ENCODE measurements at regions of chr19 and their contacts with region 1.

Region 1: GRCh38 chr19:4342615-4343369 is 570 bp upstream of the MPND start:
- DNase-seq: peak; percentile 81 to 97 (median 91)
- ATAC-seq: peak; percentile 79 to 81 (median 81)
- H3K4me3 ChIP-seq: peak overlapping the region; percentile 73 to 96
- H3K4me3 Mint-ChIP-seq: peak overlapping the region; percentile 84 to 90 (median 89)
- H3K27ac ChIP-seq: peak overlapping the region; percentile 86
- H3K27ac Mint-ChIP-seq: peak overlapping the region; percentile 84 to 94
- H3K4me1 ChIP-seq: peaks cover 8 to 46% of the 10 kb centered on the region in 2 experiments
- H3K4me1 Mint-ChIP-seq: peaks cover 30 to 41% (median 40%) of the 10 kb centered on the region in 3 donors
- H3K27me3 ChIP-seq: no peaks in the 10 kb centered on the region
- H3K27me3 Mint-ChIP-seq: no peaks in the 10 kb centered on the region

Region 2: DNA sequence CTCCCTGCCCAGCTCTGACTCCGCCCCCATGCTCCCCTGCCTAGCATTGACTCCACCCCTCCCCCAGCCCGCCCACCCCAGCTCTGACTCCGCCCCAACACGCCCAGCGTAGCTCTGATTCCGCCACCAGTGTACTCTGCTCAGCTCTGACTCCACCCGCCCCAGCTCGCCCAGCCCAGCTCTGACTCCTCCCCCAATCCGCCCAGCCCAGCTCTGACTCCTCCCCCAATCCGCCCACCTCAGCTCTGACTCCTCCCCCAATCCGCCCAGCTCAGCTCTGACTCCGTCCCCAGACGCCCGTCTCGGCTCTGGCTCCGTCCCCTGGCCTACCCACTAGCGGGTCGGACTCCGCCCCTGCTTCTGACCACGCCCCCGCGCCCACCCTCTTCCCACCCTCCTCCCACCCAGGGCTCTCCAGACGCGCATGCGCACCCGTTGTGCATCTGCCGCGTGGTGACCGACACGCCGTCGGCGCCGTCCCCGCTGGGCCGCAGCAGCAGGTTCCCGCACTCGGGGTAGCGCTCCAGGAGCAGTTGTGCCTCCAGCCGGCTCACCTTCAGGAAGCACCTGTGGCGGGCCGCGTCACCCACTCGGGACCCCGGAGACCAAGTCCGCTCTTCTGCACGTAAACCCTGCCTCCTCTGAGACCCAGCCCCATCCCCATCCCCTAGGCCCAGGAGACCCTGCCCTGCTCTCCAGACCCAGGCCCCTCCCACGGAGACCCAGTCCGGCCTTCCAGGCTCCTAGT is 14.4 kb before region 1 on chr19:
- CTCF ChIA-PET with region 1: interaction called in 1 of 2 experiments, 21 read pairs
- POLR2A ChIA-PET with region 1: interaction called in 1 of 2 experiments, 13 read pairs
- DNase-seq: peak; percentile 78 to 96 (median 90)
- ATAC-seq: peak; percentile 83 to 90 (median 88)
- H3K4me3 ChIP-seq: peak overlapping the region; percentile 62 to 65
- H3K4me3 Mint-ChIP-seq: peak overlapping the region; percentile 75 to 87 (median 79)
- H3K27ac ChIP-seq: peak overlapping the region; percentile 10
- H3K27ac Mint-ChIP-seq: peak overlapping the region; percentile 74 to 79
- H3K4me1 ChIP-seq: peaks cover 3 to 31% of the 10 kb centered on the region in 2 experiments
- H3K4me1 Mint-ChIP-seq: peaks cover 25 to 30% (median 26%) of the 10 kb centered on the region in 3 donors
- H3K27me3 ChIP-seq: peaks cover 0 to 14% of the 10 kb centered on the region in 2 experiments
- H3K27me3 Mint-ChIP-seq: peaks cover 0 to 4% of the 10 kb centered on the region in 2 donors